BJ (cell line): ENCODE measurements at regions of chr1 and their contacts with region 1.

Region 1: DNA sequence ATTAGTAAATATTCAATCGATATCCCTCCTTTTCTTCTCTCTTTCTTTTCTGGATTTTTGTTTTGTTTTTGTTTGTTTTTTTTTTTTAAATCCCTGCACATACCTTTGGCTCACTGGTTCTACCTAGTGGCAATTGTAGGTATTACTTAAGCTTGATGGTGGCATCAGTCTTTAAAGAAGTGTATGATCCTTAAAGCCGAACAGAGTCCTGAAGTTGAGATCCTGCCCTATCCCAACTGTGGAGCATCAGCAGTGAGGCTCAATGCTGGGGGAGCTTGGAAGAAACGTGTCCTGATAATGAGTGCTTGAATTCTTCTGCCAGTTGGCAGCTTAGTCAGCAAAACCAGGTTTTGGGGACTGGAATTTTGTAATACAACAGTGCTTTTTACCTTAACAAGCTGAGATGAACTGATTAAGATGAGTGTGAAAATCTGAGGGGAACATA is 60.8 kb downstream of the FASLG start:
- DNase-seq: no peak
- H3K4me3 ChIP-seq: no peak overlapping the region
- H3K27me3 ChIP-seq: no peaks in the 10 kb centered on the region
- CTCF ChIP-seq: peak; percentile 74

Region 2: DNA sequence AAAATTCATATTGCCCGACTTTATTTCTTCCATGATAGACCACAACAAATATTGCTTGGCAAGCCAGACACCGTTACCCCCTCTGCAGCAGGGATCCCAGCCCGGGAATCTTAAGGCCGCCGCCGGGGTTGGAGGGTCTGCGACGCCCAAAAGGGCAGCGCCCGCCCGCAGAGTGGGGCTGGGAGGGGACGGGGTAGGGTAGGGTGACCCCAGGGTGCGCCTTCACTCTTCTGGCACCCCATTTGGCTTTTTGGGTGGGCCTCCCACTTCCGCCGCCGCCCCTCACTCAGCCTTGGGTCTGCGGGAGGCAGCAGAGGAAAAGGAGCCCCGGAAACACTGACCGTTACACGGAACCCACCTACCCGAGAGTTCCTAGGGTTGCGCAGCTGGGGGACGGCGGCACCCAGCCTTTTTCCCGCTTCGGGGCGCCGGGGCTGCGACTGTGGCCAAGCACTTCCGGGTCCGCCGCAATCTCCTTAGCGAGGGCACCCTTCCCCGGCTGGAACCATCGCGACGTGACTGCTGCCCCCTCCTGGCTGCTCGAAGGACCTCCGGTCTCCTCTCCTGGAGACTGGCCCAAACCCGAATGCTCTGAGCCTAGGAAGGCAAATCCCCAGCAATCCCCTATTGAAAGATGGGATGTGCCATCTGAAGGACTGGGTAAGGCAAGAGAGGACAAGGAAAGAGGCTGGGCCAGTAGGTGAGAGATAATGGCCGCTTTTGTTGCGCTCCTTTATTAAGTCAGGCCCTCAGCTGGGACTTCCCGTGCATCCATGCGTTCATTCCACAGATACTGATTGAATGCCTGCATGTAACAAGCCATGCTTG is 275.9 kb before region 1 on chr1 and contains the start of gene PIGC:
- CTCF ChIA-PET with region 1: interaction called, 36 read pairs
- POLR2A ChIA-PET with region 1: no interaction called
- DNase-seq: no peak
- H3K4me3 ChIP-seq: peak within 1 kb of the TSS; percentile 92
- H3K27me3 ChIP-seq: no peaks in the 10 kb centered on the region
- CTCF ChIP-seq: peak; percentile 97
- polyA plus RNA-seq, gene PIGC: 20.7 and 24.4 TPM in 2 replicates

Region 3: GRCh38 chr1:172449585-172450534 is 269.9 kb before region 1 on chr1:
- CTCF ChIA-PET with region 1: interaction called, 36 read pairs
- POLR2A ChIA-PET with region 1: no interaction called
- DNase-seq: no peak
- H3K4me3 ChIP-seq: no peak overlapping the region
- H3K27me3 ChIP-seq: no peaks in the 10 kb centered on the region
- CTCF ChIP-seq: peak; percentile 87

Region 4: GRCh38 chr1:172609528-172609927 is 110.2 kb before region 1 on chr1:
- CTCF ChIA-PET with region 1: interaction called, 28 read pairs
- POLR2A ChIA-PET with region 1: no interaction called
- DNase-seq: no peak
- H3K4me3 ChIP-seq: no peak overlapping the region
- H3K27me3 ChIP-seq: no peaks in the 10 kb centered on the region
- CTCF ChIP-seq: peak; percentile 31; the same call in 1 of the 2 replicates

Region 5: GRCh38 chr1:172948457-172948856 is 228.7 kb after region 1 on chr1:
- CTCF ChIA-PET with region 1: no interaction called
- POLR2A ChIA-PET with region 1: no interaction called
- DNase-seq: no peak
- H3K4me3 ChIP-seq: no peak overlapping the region
- H3K27me3 ChIP-seq: no peaks in the 10 kb centered on the region
- CTCF ChIP-seq: no peak